CD4-positive, alpha-beta memory T cell (primary cell): ENCODE measurements at regions of chr1 and their contacts with region 1.

Region 1: GRCh38 chr1:37449936-37450335 is 24.4 kb upstream of the ZC3H12A start:
- DNase-seq: peak in 3 of 5 donors; percentile 13 to 22 (median 16)
- H3K4me3 ChIP-seq: no peak overlapping the region
- H3K4me3 Mint-ChIP-seq: peak overlapping the region in 2 of 8 donors; percentile 17 to 42
- H3K27ac ChIP-seq: no peak overlapping the region
- H3K27ac Mint-ChIP-seq: peak overlapping the region in 1 of 7 donors; percentile 70
- H3K4me1 ChIP-seq: peaks cover 10% of the 10 kb centered on the region
- H3K4me1 Mint-ChIP-seq: peaks cover 4 to 14% (median 7%) of the 10 kb centered on the region in 4 donors
- H3K27me3 ChIP-seq: no peaks in the 10 kb centered on the region
- H3K27me3 Mint-ChIP-seq: peaks cover 4 to 8% of the 10 kb centered on the region in 2 donors

Region 2: DNA sequence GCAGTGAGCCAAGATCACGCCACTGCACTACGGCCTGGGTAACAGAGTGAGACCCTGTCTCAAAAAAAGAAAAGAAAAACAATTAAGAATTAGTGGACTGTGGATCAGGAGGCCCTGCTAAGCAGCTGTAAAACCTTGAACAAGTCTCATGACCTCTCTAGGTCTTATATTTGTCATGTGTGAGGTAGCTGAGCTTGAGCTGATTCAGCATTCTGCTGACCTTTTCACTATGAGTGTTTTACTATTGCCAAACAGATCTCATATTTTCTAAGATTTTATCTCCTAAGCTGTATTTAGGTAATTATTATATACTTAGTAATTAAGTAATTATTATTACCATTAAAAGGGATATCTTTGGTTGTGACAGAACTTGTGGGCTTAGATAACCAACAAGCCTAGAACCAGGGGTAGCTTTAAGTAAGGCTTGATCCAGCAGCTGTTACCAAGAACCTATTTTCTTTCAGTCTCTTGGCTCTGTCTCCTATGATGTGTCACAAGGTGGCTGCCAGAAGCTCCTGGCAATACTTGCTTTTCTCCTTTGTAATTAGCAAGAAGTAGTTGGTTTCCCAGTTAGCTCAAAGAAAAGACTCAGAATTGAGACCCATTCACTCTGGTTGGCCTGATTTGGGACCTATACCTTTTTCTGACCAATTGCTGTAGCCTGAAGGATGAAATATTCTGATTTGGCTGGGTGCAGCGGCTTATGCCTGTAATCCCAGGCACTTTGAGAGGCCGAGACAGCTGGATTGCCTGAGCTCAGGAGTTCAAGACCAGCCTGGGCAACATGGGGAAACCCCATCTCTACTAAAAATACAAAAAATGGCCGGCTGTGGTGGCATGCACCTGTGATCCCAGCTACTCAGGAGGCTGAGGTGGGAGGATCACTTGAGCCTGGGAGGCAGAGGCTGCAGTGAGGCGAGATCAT is 15.9 kb after region 1 on chr1:
- CTCF ChIA-PET with region 1: interaction called, 101 read pairs
- POLR2A ChIA-PET with region 1: no interaction called
- intact Hi-C with region 1: no loop called
- DNase-seq: no peak
- H3K4me3 ChIP-seq: no peak overlapping the region
- H3K4me3 Mint-ChIP-seq: no peak overlapping the region
- H3K27ac ChIP-seq: no peak overlapping the region
- H3K27ac Mint-ChIP-seq: no peak overlapping the region
- H3K4me1 ChIP-seq: no peaks in the 10 kb centered on the region
- H3K4me1 Mint-ChIP-seq: peaks cover 6 to 10% (median 7%) of the 10 kb centered on the region in 4 donors
- H3K27me3 ChIP-seq: no peaks in the 10 kb centered on the region
- H3K27me3 Mint-ChIP-seq: no peaks in the 10 kb centered on the region

Region 3: GRCh38 chr1:37493336-37494098 is 43.6 kb after region 1 on chr1:
- CTCF ChIA-PET with region 1: interaction called, 417 read pairs
- POLR2A ChIA-PET with region 1: interaction called, 76 read pairs
- intact Hi-C with region 1: no loop called
- DNase-seq: no peak
- H3K4me3 ChIP-seq: no peak overlapping the region
- H3K4me3 Mint-ChIP-seq: no peak overlapping the region
- H3K27ac ChIP-seq: no peak overlapping the region
- H3K27ac Mint-ChIP-seq: peak overlapping the region in 6 of 7 donors; percentile 18 to 66 (median 46)
- H3K4me1 ChIP-seq: no peaks in the 10 kb centered on the region
- H3K4me1 Mint-ChIP-seq: peaks cover 8 to 17% (median 9%) of the 10 kb centered on the region in 4 donors
- H3K27me3 ChIP-seq: no peaks in the 10 kb centered on the region
- H3K27me3 Mint-ChIP-seq: no peaks in the 10 kb centered on the region

Region 4: DNA sequence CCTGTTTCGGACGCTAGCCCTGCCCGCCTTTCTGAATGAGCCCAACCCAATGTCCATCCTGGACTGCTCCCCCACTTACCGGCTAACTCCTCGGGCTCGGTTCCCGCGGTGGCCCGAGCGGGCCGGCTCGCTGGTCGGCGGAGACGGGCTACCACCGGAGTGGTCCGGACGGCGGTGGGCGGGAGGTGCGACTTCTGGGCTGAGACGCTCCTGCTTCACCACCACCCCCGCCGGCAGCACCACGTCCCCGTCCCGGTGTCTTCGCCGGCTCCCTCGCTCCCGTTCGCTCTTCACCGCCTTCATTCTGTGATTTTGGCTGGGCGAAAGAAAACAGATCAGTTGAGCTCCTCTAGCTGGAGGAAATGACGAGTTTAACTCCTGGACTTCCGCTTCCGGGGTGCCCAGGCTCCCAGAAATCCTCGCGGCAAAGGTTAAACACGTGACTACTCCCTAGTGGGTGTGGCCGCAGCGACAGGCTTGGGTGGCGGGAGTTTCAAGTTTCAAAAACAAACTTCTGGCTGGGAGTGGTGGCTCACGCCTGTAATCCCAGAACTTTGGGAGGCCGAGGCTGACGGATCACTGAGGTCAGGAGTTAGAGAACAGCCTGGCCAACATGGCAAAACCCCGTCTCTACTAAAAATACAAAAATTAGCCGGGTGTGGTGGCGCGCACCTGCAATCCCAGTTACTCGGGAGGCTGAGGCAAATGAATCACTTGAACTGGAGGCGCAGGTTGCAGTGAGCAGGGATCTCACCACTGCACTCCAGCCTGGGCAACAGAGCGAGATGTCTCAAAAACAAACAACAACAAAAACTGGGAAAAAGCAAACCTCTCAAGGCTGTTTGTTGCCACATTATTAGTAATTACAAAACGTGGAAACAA is 104.2 kb after region 1 on chr1 and contains the start of gene SNIP1:
- CTCF ChIA-PET with region 1: interaction called, 3 read pairs
- POLR2A ChIA-PET with region 1: no interaction called
- intact Hi-C with region 1: loop called (anchors 1 kb)
- DNase-seq: peak; percentile 90 to 96 (median 92)
- H3K4me3 ChIP-seq: peak within 1 kb of the TSS; percentile 96 to 99
- H3K4me3 Mint-ChIP-seq: peak within 1 kb of the TSS; percentile 95 to 100 (median 98)
- H3K27ac ChIP-seq: peak within 1 kb of the TSS; percentile 96
- H3K27ac Mint-ChIP-seq: peak within 1 kb of the TSS; percentile 81 to 100 (median 98)
- H3K4me1 ChIP-seq: peaks cover 30% of the 10 kb centered on the region
- H3K4me1 Mint-ChIP-seq: peaks cover 26 to 49% (median 36%) of the 10 kb centered on the region in 4 donors
- H3K27me3 ChIP-seq: no peaks in the 10 kb centered on the region
- H3K27me3 Mint-ChIP-seq: no peaks in the 10 kb centered on the region
- total RNA-seq, gene SNIP1: 29.8 to 30.2 TPM